GM10248 (cell line): ENCODE measurements at regions of chr5 and their contacts with region 1.

Region 1: GRCh38 chr5:108260117-108260857 is 121.6 kb downstream of the FBXL17 start:
- DNase-seq: peak; percentile 55
- CTCF ChIP-seq: peak; percentile 88

Region 2: DNA sequence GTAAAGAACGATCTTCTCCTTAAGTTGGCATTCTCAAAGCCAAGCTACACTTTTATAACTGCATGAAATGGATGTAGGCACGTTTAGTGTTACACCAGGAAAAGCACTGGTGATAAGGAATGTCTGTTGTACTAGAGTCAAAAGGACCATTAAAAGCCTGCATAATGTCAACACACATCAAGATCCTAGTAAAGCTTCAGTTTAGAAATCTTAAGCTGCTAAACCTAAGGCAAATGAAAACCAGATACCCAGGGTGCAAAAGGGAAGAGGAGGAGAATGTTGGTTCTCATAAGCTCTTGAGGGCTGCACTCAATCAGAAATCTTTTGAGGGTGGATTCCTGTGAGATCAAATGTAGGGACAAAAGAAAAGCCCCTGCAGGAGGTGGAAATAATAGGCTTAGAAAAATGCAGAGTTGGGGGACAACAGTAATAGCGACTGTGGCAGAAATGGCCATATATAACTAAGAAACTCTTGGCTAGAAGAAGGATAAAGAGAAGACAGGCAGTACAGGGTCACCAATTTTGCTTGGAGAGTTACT is 26.6 kb before region 1 on chr5:
- CTCF ChIA-PET with region 1: interaction called, 15 read pairs
- POLR2A ChIA-PET with region 1: no interaction called
- DNase-seq: no peak
- CTCF ChIP-seq: no peak

Region 3: DNA sequence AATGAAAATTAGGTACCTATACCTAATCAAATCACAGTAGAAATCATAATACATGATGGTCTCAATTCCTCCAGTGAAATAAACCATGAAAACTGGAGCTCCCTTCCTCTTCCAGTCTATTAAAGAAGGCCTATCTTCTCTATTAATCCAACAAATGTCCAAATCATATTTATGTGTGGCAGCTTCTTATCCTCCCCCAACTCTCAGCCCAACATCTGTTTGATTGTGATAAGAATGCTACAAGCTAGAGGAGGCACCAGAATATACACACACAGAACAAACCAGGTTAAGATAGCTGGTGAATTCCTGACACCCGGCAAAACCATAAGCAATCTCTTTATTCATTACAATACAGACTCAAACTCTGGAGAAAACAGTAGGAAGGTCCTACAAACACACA is 10.8 kb after region 1 on chr5:
- CTCF ChIA-PET with region 1: interaction called, 46 read pairs
- POLR2A ChIA-PET with region 1: no interaction called
- DNase-seq: no peak
- CTCF ChIP-seq: no peak

Region 4: GRCh38 chr5:108326982-108327381 is 66.7 kb after region 1 on chr5:
- CTCF ChIA-PET with region 1: interaction called, 11 read pairs
- POLR2A ChIA-PET with region 1: no interaction called
- DNase-seq: no peak
- CTCF ChIP-seq: no peak

Region 5: GRCh38 chr5:108381954-108382783 is 121.9 kb after region 1 on chr5 and contains the start of gene FBXL17:
- CTCF ChIA-PET with region 1: interaction called, 10 read pairs
- POLR2A ChIA-PET with region 1: no interaction called
- DNase-seq: peak; percentile 91
- CTCF ChIP-seq: no peak